ENCODE measurements at regions of chr20 and their contacts with region 1.

Region 1: GRCh38 chr20:34639755-34640222 is 37.1 kb downstream of the PIGU start:
- DNase-seq: no peak

Region 2: GRCh38 chr20:34676642-34677373 is 37.0 kb after region 1 on chr20 and contains the start of gene PIGU:
- intact Hi-C with region 1: loop called (anchors 5 kb)
- DNase-seq: peak; percentile 95 to 99 (median 97)

Measured in posterior cingulate gyrus (tissue), 11 donors.